ENCODE measurements at regions of chr6 and their contacts with region 1.

Region 1: DNA sequence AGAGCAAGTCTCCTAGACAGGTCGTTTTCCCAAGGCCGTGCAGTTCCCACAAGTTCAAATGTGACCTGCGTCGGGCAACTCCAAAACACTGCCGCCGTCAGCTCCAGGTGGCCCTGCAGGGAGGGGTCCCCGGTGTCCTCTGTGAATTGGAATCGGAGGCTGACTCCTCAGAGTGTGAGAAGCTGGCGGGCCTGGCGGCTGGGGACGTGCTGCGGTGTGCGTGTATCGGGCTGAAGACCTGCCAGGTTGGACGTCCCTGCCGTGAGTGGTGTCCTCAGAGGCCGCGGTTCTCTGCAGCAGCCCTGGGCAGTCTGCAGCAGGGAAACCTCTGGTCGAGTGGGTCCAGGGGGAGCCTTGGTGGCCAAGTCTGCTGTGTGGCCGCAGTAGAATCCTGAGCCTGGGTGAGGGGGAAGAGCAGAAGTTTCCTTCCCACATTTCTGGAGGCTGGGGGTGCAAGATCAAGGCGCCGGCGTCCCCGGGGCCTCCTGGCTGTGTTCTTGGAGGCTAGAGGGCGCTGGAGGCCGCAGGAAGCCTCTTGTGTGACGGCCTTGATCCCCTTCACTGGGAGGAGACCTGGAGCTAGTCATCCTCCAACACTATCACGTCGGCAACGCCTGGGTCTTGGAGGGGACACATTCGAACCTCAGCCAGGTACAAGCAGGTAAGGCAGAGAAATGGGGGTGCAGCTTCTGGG is 115.2 kb upstream of the FRMD1 start:
- DNase-seq: peak; percentile 40 to 61 (median 48)
- ATAC-seq: peak; percentile 89
- H3K4me3 ChIP-seq: no peak overlapping the region
- H3K27ac ChIP-seq: no peak overlapping the region
- H3K4me1 ChIP-seq: peaks cover 0 to 7% of the 10 kb centered on the region in 2 experiments; a peak in 1 of 5 replicates
- H3K27me3 ChIP-seq: peaks cover 55 to 100% of the 10 kb centered on the region in 2 experiments
- CTCF ChIP-seq: peak; percentile 62
- EP300 ChIP-seq: no peak
- POLR2A ChIP-seq: no peak
- RAD21 ChIP-seq: peak; percentile 25 to 57; a peak in 3 of 4 replicates

Region 2: DNA sequence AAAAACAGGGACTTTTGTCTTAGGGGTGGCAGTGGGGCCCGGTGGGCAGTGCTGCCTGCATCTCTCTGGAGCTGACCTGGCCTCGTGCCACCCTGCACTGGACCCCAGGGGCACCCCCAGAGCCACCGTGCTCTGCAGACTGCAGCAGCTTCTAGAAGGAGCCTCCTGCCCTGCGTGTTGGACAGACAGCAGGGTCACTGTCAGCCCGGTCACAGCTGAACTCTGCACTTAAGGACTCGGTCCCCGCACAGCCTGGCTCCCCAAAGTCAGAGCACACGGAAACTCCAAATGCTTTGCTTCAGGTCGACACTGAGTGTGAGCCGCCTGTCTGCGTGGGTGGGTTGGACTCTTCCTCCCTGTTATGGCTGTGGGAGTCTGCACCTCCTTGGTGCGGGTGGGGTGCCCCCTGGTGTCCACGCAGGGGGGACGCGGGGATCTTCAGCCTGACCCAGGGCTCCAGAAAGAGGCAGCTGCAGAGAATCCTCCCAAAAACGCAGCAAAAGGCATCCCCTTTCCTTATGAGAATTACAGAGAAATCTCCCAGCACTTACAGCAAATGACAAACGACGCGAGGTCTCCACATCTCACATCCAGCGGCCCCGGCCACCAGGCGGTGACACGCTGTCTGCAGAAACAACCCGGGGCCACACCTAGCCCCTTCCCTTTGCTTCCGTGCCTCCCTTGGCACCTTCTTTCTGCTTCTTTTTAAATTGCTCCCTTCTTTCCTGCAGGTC is 161.7 kb after region 1 on chr6:
- CTCF ChIA-PET with region 1: interaction called, 4 read pairs
- POLR2A ChIA-PET with region 1: no interaction called
- in situ Hi-C with region 1: no loop called
- intact Hi-C with region 1: loop called (anchors 2 kb)
- DNase-seq: peak; percentile 68 to 86 (median 82)
- ATAC-seq: peak; percentile 99
- H3K4me3 ChIP-seq: no peak overlapping the region
- H3K27ac ChIP-seq: no peak overlapping the region
- H3K4me1 ChIP-seq: peaks cover 0 to 4% of the 10 kb centered on the region in 2 experiments; a peak in 1 of 5 replicates
- H3K27me3 ChIP-seq: peaks cover 11 to 29% of the 10 kb centered on the region in 2 experiments
- CTCF ChIP-seq: peak; percentile 71 to 79 (median 78)
- EP300 ChIP-seq: no peak
- POLR2A ChIP-seq: no peak
- RAD21 ChIP-seq: peak; percentile 61 to 79

Region 3: DNA sequence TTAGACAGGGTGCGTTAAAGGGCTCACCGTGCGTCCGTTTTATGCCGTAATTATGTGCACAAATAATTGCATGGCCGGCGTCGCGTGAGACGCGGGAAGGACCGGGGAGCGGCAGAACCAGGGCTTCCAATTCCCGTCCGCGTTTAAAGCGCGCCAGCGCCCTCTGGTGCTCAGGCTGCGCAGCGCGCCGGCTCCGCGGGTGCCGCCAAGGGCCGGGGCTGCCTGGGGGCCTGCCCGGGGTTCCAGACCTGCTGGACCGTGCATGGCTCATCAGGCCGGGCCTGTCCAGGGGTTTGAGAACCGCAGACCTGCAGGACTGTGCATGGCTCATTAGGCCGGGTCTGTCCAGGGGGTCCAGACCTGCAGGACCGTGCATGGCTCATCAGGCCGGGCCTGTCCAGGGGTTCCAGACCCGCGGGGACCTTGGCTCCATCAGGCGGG is 690.5 kb after region 1 on chr6:
- CTCF ChIA-PET with region 1: no interaction called
- POLR2A ChIA-PET with region 1: no interaction called
- in situ Hi-C with region 1: no loop called
- intact Hi-C with region 1: loop called (anchors 10 kb)
- DNase-seq: peak; percentile 70 to 89 (median 88)
- ATAC-seq: peak; percentile 99
- H3K4me3 ChIP-seq: no peak overlapping the region
- H3K27ac ChIP-seq: no peak overlapping the region
- H3K4me1 ChIP-seq: peaks cover 0 to 4% of the 10 kb centered on the region in 2 experiments; a peak in 1 of 5 replicates
- H3K27me3 ChIP-seq: peaks cover 40 to 78% of the 10 kb centered on the region in 2 experiments
- CTCF ChIP-seq: peak; percentile 88 to 94 (median 89)
- EP300 ChIP-seq: no peak
- POLR2A ChIP-seq: no peak
- RAD21 ChIP-seq: peak; percentile 75 to 92